Aorta (tissue), 5 donors: ENCODE measurements at regions of chr17 and their contacts with region 1.

Region 1: GRCh38 chr17:40417609-40418427 is at the start of gene TOP2A:
- DNase-seq: peak; percentile 93 to 96
- ATAC-seq: peak; percentile 100
- H3K4me3 ChIP-seq: peak within 1 kb of the TSS; percentile 22 to 54
- H3K27ac ChIP-seq: peak within 1 kb of the TSS in 1 of 2 donors; percentile 18
- H3K4me1 ChIP-seq: no peaks in the 10 kb centered on the region
- H3K27me3 ChIP-seq: no peaks in the 10 kb centered on the region
- total RNA-seq, gene TOP2A: 1.8 to 4.4 TPM

Region 2: DNA sequence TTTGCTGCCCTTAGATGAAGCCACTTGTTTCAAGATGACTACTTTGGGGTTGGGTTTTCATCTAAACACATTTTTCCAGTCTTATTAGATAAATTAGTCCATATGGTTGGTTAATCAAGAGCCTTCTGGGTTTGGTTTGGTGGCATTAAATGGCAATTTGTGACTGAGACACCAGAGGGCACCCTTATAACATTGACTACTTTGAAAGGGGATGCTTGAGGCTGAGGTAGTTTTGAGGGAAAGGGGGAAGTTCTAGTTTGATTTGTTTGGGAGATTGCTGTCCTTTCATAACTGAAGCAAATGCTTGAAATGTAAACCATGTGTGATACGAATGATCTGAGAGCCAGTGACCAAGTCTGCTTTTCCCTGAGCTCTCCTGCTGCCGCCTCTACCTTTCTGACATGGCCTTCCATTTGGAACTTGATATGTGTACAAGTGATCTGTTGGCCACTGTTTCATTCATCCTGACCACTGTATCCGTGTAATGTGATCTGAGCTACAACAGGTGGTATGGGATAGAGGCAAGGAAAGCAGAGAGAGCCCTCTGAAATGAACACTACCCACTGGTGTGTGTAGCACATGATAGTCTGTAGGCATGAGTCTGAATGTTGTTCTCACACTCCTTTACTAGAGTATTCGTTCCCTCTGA is 114.7 kb before region 1 on chr17:
- intact Hi-C with region 1: loop called in 1 of 2 experiments (anchors 10 kb)
- DNase-seq: no peak
- ATAC-seq: peak; percentile 74
- H3K4me3 ChIP-seq: no peak overlapping the region
- H3K27ac ChIP-seq: no peak overlapping the region
- H3K4me1 ChIP-seq: no peaks in the 10 kb centered on the region
- H3K27me3 ChIP-seq: no peaks in the 10 kb centered on the region